Activated T-helper 1 cell treated with anti-CD3 and anti-CD28 coated beads, Interleukin-12 subunit alpha, Interleukin-12 subunit beta, Interleukin-2, Interleukin-4 antibody, amounts not matched to agents 30 ng/mL and 10 ng/mL and 1 ng/mL, durations not matched to agents 14 hours and 24 hours and 36 hours (primary cell): ENCODE measurements at regions of chr3 and their contacts with region 1.

Region 1: DNA sequence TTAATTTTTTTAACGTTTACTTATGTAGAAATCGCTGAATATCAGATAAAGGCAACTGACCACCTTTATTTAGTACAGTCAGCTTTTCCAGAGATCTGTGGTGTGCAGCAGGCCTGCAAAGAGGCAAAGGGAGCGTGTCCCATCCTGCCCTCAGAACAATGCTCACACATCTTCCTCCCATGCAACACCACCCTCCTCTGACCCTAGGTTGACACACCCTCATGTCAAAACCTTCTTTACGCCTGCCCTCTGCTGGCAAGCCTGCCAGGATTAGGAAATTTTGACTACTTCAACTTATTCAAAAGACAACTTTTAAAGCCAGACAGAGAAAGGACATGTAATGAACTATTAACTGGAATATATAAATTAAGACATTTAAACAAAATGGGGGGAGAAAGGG is 513.7 kb downstream of the FOXP1 start:
- DNase-seq: peak; percentile 33
- H3K4me3 Mint-ChIP-seq: no peak overlapping the region
- H3K27ac Mint-ChIP-seq: peak overlapping the region; percentile 6
- H3K4me1 Mint-ChIP-seq: peaks cover 72% of the 10 kb centered on the region
- H3K27me3 Mint-ChIP-seq: no peaks in the 10 kb centered on the region

Region 2: DNA sequence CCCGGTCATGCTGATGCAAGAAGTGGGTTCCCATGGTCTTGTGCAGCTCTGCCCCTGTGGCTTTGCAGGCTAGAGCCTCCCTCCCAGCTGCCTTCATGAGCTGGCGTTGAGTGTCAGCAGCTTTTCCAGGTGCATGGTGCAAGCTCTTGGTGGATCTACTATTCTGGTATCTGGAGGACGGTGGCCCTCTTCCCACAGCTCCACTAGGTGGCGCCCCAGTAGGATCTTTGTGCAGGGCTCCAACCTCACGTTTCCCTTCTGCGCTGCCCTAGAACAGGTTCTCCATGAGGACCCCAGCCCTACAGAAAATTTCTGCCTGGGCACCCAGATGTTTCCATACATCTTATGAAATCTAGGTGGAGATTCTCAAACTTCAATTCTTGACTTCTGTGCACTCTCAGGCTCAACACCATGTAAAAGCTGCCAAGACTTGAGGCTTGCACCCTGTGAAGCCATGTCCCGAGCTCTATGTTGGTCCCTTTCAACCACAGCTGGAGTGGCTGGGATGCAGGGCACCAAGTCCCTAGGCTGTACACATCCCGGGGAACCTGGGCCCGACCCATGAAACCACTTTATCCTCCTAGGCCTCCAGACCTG is 519.0 kb before region 1 on chr3:
- intact Hi-C with region 1: loop called (anchors 5 kb)
- DNase-seq: peak; percentile 34
- H3K4me3 Mint-ChIP-seq: no peak overlapping the region
- H3K27ac Mint-ChIP-seq: no peak overlapping the region
- H3K4me1 Mint-ChIP-seq: no peaks in the 10 kb centered on the region
- H3K27me3 Mint-ChIP-seq: peaks cover 17% of the 10 kb centered on the region

Region 3: GRCh38 chr3:70982700-70983140 is 87.1 kb before region 1 on chr3:
- intact Hi-C with region 1: no loop called
- DNase-seq: peak; percentile 24
- H3K4me3 Mint-ChIP-seq: peak overlapping the region; percentile 52
- H3K27ac Mint-ChIP-seq: peak overlapping the region; percentile 95
- H3K4me1 Mint-ChIP-seq: peaks cover 57% of the 10 kb centered on the region
- H3K27me3 Mint-ChIP-seq: no peaks in the 10 kb centered on the region

Region 4: GRCh38 chr3:71050538-71051258 is 19.1 kb before region 1 on chr3:
- intact Hi-C with region 1: loop called (anchors 1 kb)
- DNase-seq: no peak
- H3K4me3 Mint-ChIP-seq: no peak overlapping the region
- H3K27ac Mint-ChIP-seq: peak overlapping the region; percentile 60
- H3K4me1 Mint-ChIP-seq: peaks cover 70% of the 10 kb centered on the region
- H3K27me3 Mint-ChIP-seq: peaks cover 5% of the 10 kb centered on the region

Region 5: DNA sequence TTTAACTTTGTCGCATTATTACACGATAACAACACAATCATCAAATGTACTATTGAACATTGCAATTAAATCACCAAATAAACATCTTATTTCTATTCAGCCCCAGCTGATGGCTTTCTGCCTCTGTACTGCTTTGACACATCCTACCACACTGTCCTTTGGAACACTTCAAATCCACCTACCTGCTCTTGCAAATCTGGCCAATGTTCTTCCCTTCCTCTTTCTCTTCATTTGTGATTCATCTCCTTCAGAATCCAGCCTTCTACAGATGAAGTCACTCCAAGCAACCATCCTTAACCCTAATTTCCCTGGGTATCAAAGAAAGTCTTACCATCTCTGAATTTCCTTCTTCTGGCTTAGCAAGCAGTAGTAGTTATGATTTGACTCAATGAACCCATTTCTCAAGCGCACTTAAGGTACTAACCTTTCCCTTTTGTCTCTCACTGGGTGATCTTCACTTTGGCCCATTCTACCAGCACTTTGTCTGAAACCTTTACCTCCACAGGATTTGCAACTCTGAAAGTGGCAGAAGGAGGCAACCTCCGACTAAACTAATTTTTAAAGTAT is 10.8 kb after region 1 on chr3:
- intact Hi-C with region 1: loop called (anchors 1 kb)
- DNase-seq: no peak
- H3K4me3 Mint-ChIP-seq: peak overlapping the region; percentile 6
- H3K27ac Mint-ChIP-seq: peak overlapping the region; percentile 30
- H3K4me1 Mint-ChIP-seq: peaks cover 80% of the 10 kb centered on the region
- H3K27me3 Mint-ChIP-seq: peaks cover 2% of the 10 kb centered on the region

Region 6: DNA sequence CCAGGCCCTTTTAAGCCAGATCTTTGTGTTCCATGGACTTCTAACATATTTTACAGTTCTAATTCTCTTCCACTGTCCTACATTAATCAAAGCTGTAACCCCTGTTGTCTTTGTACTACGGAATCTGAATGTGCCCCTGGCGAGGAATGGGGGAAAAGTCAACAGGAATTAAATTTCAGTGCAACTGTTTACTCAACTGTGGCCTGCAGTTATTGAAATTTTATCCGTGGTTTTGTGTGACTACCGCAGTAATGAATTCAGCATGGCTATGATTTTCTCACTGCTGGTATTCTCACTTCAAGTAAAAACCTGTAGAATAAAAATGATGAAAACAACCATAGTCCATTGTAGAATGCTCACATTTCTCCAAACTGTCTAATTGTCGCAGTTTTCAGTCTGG is 125.7 kb after region 1 on chr3:
- intact Hi-C with region 1: loop called (anchors 5 kb)
- DNase-seq: no peak
- H3K4me3 Mint-ChIP-seq: no peak overlapping the region
- H3K27ac Mint-ChIP-seq: no peak overlapping the region
- H3K4me1 Mint-ChIP-seq: peaks cover 18% of the 10 kb centered on the region
- H3K27me3 Mint-ChIP-seq: peaks cover 5% of the 10 kb centered on the region

Region 7: DNA sequence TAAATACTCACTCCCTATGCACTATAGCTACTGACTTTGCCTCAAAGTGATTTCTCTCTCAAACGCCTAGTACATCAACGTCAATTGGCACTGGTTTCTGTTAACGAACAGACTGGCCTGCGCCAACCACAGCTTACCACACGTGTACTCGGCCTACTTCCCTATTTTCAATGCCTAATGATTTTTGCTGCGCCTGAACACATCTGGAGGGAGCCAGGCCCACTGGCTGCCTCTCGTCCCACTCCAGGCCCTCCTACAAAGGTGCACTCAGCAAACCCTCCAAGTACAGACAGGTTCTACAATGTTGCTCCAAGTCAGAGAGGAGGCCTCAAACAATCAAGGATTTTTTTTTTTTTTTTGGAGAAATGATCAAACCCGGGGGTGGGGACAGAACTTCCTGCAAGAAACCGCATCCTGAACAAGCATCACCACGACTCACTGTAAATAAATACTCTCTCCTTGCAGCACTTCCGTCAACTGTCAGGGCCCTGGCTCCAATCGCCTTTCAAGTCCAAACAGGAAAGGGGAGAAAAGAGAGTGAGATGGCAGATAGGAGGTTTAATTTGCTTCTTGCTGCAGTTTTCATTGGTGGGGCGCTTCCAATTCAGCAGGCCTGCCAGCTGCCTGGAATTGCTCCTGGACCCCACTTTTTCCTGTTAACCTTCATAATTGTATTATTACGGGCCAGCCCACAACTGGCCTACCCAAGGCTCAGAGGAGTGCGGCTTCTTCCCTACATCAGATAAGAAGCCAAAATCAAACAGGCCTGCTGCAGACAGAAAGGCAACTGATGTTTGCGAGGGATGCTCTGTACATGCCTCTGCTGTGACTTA is 374.4 kb after region 1 on chr3:
- intact Hi-C with region 1: loop called (anchors 5 kb)
- DNase-seq: peak; percentile 71
- H3K4me3 Mint-ChIP-seq: peak overlapping the region; percentile 74
- H3K27ac Mint-ChIP-seq: peak overlapping the region; percentile 95
- H3K4me1 Mint-ChIP-seq: peaks cover 73% of the 10 kb centered on the region
- H3K27me3 Mint-ChIP-seq: peaks cover 8% of the 10 kb centered on the region